ENCODE measurements at regions of chr6 and their contacts with region 1.

Region 1: DNA sequence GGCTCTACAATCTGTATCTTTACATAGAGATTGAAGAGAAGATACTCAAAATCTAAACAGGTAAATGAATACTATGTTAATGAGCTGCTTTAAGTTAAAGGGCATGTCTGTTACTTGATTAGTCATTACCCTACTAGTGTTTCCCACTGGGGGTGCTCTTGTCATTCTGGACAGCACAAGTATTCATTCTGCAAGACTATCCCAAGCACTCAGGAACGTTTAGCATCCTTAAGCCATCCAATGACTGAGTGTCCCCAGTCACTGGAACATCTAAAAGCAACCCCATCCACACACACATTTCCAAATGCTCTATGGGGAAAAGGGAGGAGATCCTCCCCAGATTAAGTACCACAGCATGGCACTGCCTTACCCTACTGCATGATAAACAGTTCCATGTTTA is 25.7 kb downstream of the EZR start:
- DNase-seq: peak in 5 of 14 experiments; percentile 3 to 69 (median 65)
- ATAC-seq: peak; percentile 28
- H3K4me3 ChIP-seq: no peak overlapping the region
- H3K4me3 Mint-ChIP-seq: peak overlapping the region; percentile 42
- H3K27ac ChIP-seq: no peak overlapping the region
- H3K27ac Mint-ChIP-seq: peak overlapping the region; percentile 66
- H3K4me1 ChIP-seq: peaks cover 76% of the 10 kb centered on the region
- H3K4me1 Mint-ChIP-seq: peaks cover 88% of the 10 kb centered on the region
- H3K27me3 ChIP-seq: no peaks in the 10 kb centered on the region
- H3K27me3 Mint-ChIP-seq: no peaks in the 10 kb centered on the region
- CTCF ChIP-seq: peak; percentile 51

Region 2: GRCh38 chr6:158718461-158719046 is 74.9 kb before region 1 on chr6:
- CTCF ChIA-PET with region 1: no interaction called
- POLR2A ChIA-PET with region 1: no interaction called
- intact Hi-C with region 1: loop called in 1 of 2 experiments (anchors 10 kb)
- DNase-seq: peak in 2 of 14 experiments; percentile 17 to 20
- ATAC-seq: no peak
- H3K4me3 ChIP-seq: no peak overlapping the region
- H3K4me3 Mint-ChIP-seq: no peak overlapping the region
- H3K27ac ChIP-seq: peak overlapping the region in 1 of 2 donors; percentile 73
- H3K27ac Mint-ChIP-seq: no peak overlapping the region
- H3K4me1 ChIP-seq: peaks cover 64% of the 10 kb centered on the region
- H3K4me1 Mint-ChIP-seq: peaks cover 41% of the 10 kb centered on the region
- H3K27me3 ChIP-seq: no peaks in the 10 kb centered on the region
- H3K27me3 Mint-ChIP-seq: no peaks in the 10 kb centered on the region
- CTCF ChIP-seq: no peak

Region 3: DNA sequence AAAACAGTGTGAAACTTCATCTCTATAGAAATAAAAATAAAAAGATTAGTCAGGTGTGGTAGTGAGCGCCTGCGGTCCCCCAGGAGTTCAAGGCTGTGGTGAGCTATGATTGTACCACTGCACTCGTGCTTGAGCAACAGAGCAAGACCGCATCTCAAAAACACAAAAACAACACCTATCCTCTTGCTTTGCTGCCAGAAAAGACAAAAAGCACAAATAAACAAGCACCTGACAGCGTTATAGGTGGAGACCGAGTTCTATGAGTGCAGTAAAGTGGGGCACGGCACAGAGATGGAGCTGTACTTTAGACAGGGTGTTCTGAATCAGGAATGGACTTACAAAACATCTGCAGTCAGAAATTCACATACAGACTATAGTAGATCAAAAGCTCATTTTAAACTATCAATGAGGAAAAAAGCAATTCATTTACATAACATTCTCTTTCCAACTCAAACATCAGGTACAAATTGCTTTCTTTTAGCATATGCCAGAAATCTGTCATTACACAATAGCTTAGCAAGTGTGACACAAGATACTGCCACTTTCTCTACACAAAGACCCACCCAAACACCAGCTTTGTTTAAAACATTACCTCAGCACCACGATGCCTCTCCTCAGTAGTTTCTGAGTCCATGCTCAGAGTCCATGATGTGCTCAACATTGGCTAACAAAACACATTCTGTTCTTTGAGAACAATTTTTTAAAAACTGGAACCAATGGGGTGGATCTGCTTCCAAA is 15.7 kb after region 1 on chr6:
- CTCF ChIA-PET with region 1: interaction called, 5 read pairs
- POLR2A ChIA-PET with region 1: interaction called, 15 read pairs
- intact Hi-C with region 1: no loop called
- DNase-seq: peak in 6 of 14 experiments; percentile 32 to 73 (median 50)
- ATAC-seq: peak; percentile 58
- H3K4me3 ChIP-seq: no peak overlapping the region
- H3K4me3 Mint-ChIP-seq: peak overlapping the region; percentile 60
- H3K27ac ChIP-seq: peak overlapping the region in 1 of 2 donors; percentile 43
- H3K27ac Mint-ChIP-seq: peak overlapping the region; percentile 82
- H3K4me1 ChIP-seq: peaks cover 79% of the 10 kb centered on the region
- H3K4me1 Mint-ChIP-seq: peaks cover 99% of the 10 kb centered on the region
- H3K27me3 ChIP-seq: no peaks in the 10 kb centered on the region
- H3K27me3 Mint-ChIP-seq: no peaks in the 10 kb centered on the region
- CTCF ChIP-seq: no peak

Region 4: DNA sequence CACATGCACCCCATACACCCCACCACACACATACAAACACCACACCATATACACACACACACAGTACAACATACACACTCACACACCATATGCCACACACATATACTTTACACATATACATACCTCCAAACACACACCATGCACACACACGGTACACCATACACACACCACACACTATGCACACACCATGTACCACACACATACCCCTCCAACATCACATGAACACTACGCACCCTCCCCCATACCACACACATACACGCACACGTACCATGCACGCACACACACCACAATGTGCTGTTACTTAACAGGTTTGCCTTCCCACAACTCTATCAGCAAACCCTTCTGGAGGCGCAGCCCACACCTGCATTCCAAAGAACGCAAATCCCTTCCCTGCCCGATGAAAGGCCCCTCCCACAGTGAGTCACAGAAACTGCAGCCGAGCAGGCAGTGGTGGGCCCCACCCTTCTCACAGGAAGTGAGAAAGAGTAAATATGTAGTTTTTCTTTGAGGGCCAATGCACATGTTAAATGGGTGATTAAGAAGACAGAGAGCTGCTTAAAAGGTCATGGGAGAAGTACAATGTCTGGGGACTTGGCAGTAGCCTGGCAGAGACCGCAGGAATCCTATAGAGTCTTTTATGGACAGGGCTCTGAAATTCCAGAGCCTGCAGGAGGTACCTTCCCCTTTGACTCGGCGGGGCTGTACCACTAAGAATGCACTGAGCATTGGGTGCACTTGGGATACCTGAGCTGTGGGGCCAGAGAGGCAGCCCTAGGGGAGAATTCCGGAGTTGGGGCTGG is 59.8 kb after region 1 on chr6:
- CTCF ChIA-PET with region 1: interaction called, 4 read pairs
- POLR2A ChIA-PET with region 1: interaction called, 15 read pairs
- intact Hi-C with region 1: no loop called
- DNase-seq: peak; percentile 73 to 97 (median 86)
- ATAC-seq: peak; percentile 70
- H3K4me3 ChIP-seq: peak overlapping the region; percentile 53
- H3K4me3 Mint-ChIP-seq: no peak overlapping the region
- H3K27ac ChIP-seq: peak overlapping the region; percentile 86 to 97
- H3K27ac Mint-ChIP-seq: no peak overlapping the region
- H3K4me1 ChIP-seq: peaks cover 67% of the 10 kb centered on the region
- H3K4me1 Mint-ChIP-seq: peaks cover 27% of the 10 kb centered on the region
- H3K27me3 ChIP-seq: no peaks in the 10 kb centered on the region
- H3K27me3 Mint-ChIP-seq: no peaks in the 10 kb centered on the region
- CTCF ChIP-seq: no peak

Measured in CD4-positive, alpha-beta T cell (primary cell).